HEK293 (cell line): ENCODE measurements at regions of chr17 and their contacts with region 1.

Region 1: DNA sequence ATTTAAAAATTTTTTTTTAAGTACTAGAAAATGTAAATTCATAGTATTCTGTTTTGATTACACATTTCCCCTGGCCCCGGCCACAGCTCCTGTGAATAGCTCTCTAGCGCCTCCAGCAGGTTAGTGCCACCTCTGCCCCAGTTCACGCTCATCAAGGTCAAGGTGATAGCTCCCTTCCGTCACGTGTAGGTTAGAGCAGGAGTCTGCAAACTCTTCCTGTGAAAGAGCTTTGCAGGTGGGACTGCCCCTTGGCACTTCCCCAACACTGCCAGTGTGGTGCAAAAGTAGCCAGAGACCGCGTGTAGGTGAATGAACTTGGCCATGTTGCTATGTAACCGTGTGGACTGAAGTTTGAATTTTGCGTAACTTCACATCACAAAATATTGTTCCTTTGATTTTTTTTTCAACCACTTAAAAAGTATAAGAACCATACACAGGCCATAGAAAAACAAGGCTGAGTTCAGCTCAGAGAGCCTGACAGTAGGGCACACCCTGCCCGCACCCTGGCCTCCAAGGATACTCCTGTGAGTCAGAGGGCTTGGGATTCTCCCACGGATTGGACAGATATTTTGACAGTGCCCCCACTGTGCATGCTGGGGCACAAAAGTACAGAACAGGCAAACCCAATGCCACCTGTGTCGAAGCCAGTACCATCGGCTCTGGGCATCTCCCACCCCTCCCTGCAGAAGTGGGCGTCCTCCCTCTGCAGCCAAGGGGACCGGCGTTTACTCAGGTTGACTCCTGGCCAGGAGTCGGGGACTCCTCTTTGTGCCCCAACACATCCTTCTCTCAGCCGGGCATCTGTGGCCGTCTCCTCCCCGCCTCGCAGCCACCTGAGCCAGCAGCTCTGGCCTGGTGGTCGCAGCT is 92.0 kb upstream of the CHMP6 start:
- H3K4me3 ChIP-seq: no peak overlapping the region
- H3K27ac ChIP-seq: no peak overlapping the region
- H3K4me1 ChIP-seq: no peaks in the 10 kb centered on the region
- CTCF ChIP-seq: peak; percentile 25; the same call in 1 of the 2 replicates

Region 2: GRCh38 chr17:80832888-80833583 is 66.6 kb before region 1 on chr17:
- CTCF ChIA-PET with region 1: interaction called, 10 read pairs
- POLR2A ChIA-PET with region 1: no interaction called
- H3K4me3 ChIP-seq: peak overlapping the region; percentile 30
- H3K27ac ChIP-seq: peak overlapping the region; percentile 70
- H3K4me1 ChIP-seq: peaks cover 6% of the 10 kb centered on the region
- CTCF ChIP-seq: no peak